GM18951 (cell line): ENCODE measurements at regions of chr5 and their contacts with region 1.

Region 1: DNA sequence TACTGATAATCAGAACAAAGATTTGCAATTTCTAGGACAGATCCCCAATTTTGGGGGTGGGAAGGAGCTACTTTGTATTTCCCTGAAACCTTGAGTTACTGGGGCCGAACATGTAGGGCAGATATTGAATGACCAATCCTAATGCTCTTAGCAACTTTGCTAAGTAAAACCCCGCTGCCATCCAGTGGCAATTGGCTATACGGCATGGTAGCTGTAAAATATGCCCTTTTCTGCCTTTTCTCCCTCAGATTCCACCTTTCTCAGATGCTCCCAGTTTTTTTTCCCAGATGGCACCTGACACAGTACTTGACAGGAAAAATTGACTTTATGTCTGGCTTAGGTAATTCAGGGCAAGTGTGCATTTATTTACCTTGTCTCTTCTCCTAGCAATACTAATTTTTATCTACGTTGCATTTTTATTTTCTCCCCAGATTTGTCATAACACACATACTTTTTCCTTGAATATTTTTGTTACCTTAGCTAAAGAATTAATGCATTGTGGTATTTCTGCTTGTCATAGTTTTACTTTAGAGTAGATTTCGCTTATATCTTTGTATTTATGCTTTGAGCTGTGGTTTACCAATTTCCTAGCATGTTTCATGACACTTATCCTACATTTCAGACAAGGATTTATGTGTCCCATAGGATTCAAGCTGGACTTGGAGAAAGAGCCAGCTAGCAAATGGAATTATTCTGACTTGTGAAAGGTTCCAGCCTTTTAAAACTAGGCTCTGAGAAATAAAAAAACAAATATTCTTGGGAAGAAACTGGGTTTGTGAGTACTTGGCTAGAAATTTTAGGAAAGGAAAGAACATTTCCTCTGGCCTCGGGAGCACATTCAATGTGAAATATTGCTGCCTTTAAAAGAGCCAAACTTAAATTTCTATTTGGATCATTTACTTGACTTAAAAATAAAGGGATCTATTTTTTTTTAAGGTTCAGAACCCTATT is 37.4 kb downstream of the PIK3R1 start:
- POLR2A ChIP-seq: no peak

Region 2: GRCh38 chr5:67246108-67246507 is 1006.8 kb before region 1 on chr5:
- in situ Hi-C with region 1: loop called (anchors 5 kb)
- POLR2A ChIP-seq: no peak

Region 3: DNA sequence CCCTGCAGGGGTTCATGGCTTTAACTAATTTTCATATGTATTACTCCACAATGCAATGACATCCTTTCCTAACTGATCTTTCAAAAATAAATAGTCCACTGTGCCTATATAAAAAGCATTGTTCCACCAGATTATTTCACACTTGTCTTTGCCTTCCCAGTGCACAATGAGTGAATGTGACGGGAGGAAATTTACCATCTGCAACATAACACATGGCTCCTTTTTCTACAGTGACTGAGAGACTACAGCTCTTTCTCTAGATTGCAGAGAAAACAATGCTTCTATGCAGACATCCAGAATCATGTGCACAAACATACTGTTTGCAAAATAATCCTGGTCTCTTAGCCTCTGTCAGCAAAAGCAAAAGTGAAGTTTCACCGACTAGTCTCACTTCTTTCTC is 521.1 kb before region 1 on chr5:
- in situ Hi-C with region 1: no loop called
- POLR2A ChIP-seq: no peak